ENCODE measurements at regions of chr13 and their contacts with region 1.

Region 1: DNA sequence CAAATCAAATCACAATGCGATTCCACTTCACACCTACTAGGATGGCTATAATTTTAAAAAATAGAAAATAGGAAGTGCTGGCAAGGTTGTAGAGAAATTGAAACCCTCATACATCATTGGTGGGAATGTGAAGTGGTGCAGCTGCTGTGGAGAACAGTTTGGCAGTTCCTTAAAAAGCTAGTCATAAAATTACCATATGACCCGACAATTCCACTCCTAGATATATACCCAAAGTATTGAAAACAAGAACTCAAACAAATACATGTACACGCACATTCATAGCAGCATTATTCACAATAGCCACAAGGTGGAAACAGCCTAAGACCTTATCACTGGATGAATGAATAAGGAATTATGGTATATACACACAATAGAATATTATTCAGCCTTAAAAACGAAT is 12.0 kb downstream of the HMGB1 start:
- DNase-seq: no peak
- ATAC-seq: no peak

Region 2: GRCh38 chr13:30132623-30133553 is 320.8 kb before region 1 on chr13:
- intact Hi-C with region 1: loop called in 1 of 2 experiments (anchors 10 kb)
- DNase-seq: peak; percentile 96 to 99
- ATAC-seq: peak; percentile 88

Measured in left colon (tissue), 2 donors.